ENCODE measurements at regions of chr22 and their contacts with region 1.

Region 1: GRCh38 chr22:29766632-29767170 is at the start of gene ZMAT5:
- DNase-seq: peak; percentile 98
- H3K4me3 ChIP-seq: peak within 1 kb of the TSS; percentile 89
- H3K27ac ChIP-seq: peak within 1 kb of the TSS; percentile 52
- H3K4me1 ChIP-seq: peaks cover 22% of the 10 kb centered on the region
- CTCF ChIP-seq: no peak
- total RNA-seq, gene ZMAT5: 19.1 and 22.1 TPM in 2 replicates

Region 2: DNA sequence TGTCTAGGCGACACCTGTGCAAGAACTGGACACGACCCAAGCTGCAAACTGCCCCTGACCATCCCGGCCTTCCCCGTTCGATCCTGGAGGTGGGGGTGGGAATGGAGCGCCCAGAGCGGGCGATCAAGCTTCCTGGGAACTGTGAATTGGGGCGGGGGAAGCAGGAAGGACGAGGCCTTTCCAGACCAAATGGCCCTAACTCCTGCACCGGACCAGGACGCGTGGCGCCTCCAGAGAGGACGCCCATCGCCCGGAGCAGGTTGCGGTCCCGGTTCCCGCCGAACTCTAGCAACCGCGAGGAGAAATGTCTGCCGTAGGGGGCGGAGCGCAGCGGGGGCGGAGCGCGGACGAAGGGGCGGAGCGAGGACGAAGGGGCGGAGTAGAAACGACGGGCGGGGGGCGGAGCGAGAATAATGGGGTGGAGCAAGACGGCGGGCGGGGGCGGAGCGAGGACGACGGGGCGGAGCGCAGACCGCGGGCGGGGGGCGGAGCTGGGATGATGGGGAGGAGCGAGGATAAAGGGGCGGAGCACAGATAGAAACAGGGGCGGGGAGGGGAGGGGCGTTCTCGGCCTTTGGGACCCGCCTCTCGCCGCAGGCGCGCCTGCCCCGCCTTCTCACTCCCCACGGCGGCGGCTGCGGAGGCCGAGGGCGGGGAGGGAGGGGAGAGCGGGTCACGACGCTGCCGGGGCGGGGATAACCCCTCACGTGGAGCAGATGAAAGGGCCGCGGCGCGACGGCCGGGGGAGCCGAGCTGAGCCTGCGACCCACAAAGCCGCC is 883.6 kb before region 1 on chr22 and contains the start of gene ZNRF3:
- CTCF ChIA-PET with region 1: no interaction called
- POLR2A ChIA-PET with region 1: no interaction called
- intact Hi-C with region 1: loop called (anchors 10 kb)
- DNase-seq: peak; percentile 90
- H3K4me3 ChIP-seq: peak within 1 kb of the TSS; percentile 69
- H3K27ac ChIP-seq: no peak within 1 kb of the TSS
- H3K4me1 ChIP-seq: peaks cover 15% of the 10 kb centered on the region
- CTCF ChIP-seq: no peak
- total RNA-seq, gene ZNRF3: 1.2 and 3.6 TPM in 2 replicates

Region 3: DNA sequence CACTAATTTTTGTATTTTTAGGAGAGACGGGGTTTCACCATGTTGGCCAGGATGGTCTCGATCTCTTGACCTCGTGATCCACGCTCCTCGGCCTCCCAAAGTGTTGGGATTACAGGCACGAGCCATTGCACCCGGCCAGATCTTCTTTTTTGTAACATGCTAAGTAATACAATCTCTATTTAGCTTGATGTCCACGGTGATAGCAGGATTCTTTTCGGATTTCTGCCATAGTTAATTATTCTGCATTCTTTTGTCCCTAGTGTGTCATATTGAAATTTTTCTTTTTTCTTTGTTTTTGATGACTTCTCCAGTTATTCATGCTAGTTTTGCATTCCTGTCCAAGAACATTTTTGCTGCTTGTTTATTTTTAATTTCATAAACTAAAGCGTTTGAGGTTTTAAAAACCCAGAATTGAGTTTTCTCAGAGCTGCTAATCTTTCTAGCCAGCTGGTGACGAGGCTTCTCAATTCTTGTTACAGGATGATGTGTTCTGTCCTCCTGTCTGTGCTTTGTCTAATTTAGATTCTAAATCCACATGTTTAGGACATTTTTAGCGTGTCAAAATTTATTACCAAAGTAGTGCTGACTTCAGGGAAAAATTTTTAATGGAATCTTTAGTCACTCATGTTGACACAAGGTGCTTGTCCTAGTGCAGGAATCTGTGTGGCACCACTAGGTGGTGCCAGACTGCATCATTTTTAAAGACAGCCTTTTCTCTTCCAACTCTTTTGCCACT is 141.4 kb before region 1 on chr22:
- CTCF ChIA-PET with region 1: no interaction called
- POLR2A ChIA-PET with region 1: no interaction called
- intact Hi-C with region 1: no loop called
- DNase-seq: peak; percentile 60
- H3K4me3 ChIP-seq: no peak overlapping the region
- H3K27ac ChIP-seq: no peak overlapping the region
- H3K4me1 ChIP-seq: peaks cover 11% of the 10 kb centered on the region
- CTCF ChIP-seq: peak; percentile 100

Region 4: GRCh38 chr22:29837780-29838598 is 71.3 kb after region 1 on chr22 and contains the start of gene ASCC2:
- CTCF ChIA-PET with region 1: no interaction called
- POLR2A ChIA-PET with region 1: no interaction called
- intact Hi-C with region 1: loop called (anchors 5 kb)
- DNase-seq: peak; percentile 98
- H3K4me3 ChIP-seq: peak within 1 kb of the TSS; percentile 99
- H3K27ac ChIP-seq: peak within 1 kb of the TSS; percentile 14
- H3K4me1 ChIP-seq: peaks cover 19% of the 10 kb centered on the region
- CTCF ChIP-seq: no peak
- total RNA-seq, gene ASCC2: 40.2 and 44.1 TPM in 2 replicates

Region 5: GRCh38 chr22:29883045-29883774 is 116.5 kb after region 1 on chr22 and contains the start of gene MTMR3:
- CTCF ChIA-PET with region 1: no interaction called
- POLR2A ChIA-PET with region 1: no interaction called
- intact Hi-C with region 1: loop called (anchors 5 kb)
- DNase-seq: peak; percentile 91
- H3K4me3 ChIP-seq: peak within 1 kb of the TSS; percentile 98
- H3K27ac ChIP-seq: peak within 1 kb of the TSS; percentile 52
- H3K4me1 ChIP-seq: peaks cover 5% of the 10 kb centered on the region
- CTCF ChIP-seq: peak; percentile 66
- total RNA-seq, gene MTMR3: 10.9 and 22.2 TPM in 2 replicates